GM18951 (cell line): ENCODE measurements at regions of chr7 and their contacts with region 1.

Region 1: GRCh38 chr7:90403174-90404113 is at the start of gene CLDN12:
- POLR2A ChIP-seq: peak; percentile 62

Region 2: GRCh38 chr7:90173127-90173844 is 230.2 kb before region 1 on chr7:
- in situ Hi-C with region 1: loop called (anchors 25 kb)
- POLR2A ChIP-seq: no peak

Region 3: DNA sequence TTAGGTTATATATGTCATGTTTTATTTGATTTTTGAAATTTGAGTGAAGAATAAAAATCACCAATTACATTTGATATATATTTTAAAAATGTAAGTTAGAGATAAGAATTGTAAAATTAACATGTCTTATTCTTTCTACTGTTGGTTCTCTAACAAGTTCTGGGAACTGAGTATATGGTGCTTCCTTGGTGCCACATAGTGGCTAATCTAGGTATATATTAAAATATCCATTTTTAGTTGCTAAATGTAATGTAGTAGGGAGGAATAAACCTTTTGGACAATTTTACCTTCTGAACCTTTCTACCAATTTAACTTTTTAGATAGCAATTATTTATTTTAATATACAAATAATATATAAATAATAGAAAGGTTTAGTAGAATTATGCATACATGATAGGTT is 141.0 kb before region 1 on chr7:
- in situ Hi-C with region 1: loop called (anchors 25 kb)
- POLR2A ChIP-seq: no peak